Heart left ventricle (tissue), 16 donors: ENCODE measurements at regions of chr5 and their contacts with region 1.

Region 1: DNA sequence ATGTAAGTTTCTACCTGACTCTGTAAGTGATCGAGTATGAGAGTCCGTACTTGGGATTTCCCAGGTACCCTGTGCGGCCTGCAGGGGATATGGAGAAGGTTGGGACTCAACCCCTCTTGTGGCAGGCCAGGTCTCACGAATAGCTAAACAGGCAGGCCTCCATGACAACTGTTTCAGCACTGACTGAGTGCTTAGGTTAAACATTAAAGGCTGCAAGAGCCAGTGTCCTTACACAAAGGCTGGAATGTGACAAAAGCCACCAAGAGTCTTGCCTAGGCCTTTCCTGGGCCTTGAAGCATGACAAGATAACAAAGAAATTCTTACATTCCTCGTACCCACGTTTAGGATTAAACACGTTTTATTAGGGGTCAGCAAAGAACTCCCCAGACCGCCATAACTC is 58.6 kb downstream of the THBS4 start:
- DNase-seq: no peak
- ATAC-seq: no peak
- H3K4me3 ChIP-seq: no peak overlapping the region
- H3K27ac ChIP-seq: peak overlapping the region in 2 of 12 donors; percentile 35 to 47
- H3K4me1 ChIP-seq: peaks cover 0 to 11% (median 3%) of the 10 kb centered on the region in 12 donors
- H3K27me3 ChIP-seq: no peaks in the 10 kb centered on the region
- CTCF ChIP-seq: no peak
- POLR2A ChIP-seq: no peak

Region 2: GRCh38 chr5:80255732-80256479 is 162.1 kb after region 1 on chr5 and contains the start of gene SERINC5:
- intact Hi-C with region 1: loop called in 2 of 10 experiments (anchors 5 kb)
- DNase-seq: peak; percentile 91 to 95 (median 92)
- ATAC-seq: peak; percentile 76 to 95 (median 90)
- H3K4me3 ChIP-seq: peak within 1 kb of the TSS; percentile 58 to 92 (median 80)
- H3K27ac ChIP-seq: peak within 1 kb of the TSS; percentile 88 to 99 (median 96)
- H3K4me1 ChIP-seq: peaks cover 0 to 47% (median 28%) of the 10 kb centered on the region in 12 donors
- H3K27me3 ChIP-seq: no peaks in the 10 kb centered on the region
- CTCF ChIP-seq: peak in 1 of 12 donors; percentile 4
- POLR2A ChIP-seq: peak; percentile 63 to 95
- total RNA-seq, gene SERINC5: 10.9 to 25.9 (median 14.6) TPM

Region 3: GRCh38 chr5:80275347-80275746 is 181.6 kb after region 1 on chr5:
- intact Hi-C with region 1: loop called (anchors 1 to 10 kb)
- DNase-seq: no peak
- ATAC-seq: peak in 2 of 4 donors; percentile 61 to 62
- H3K4me3 ChIP-seq: no peak overlapping the region
- H3K27ac ChIP-seq: no peak overlapping the region
- H3K4me1 ChIP-seq: peaks cover 0 to 5% (median 0%) of the 10 kb centered on the region in 12 donors
- H3K27me3 ChIP-seq: no peaks in the 10 kb centered on the region
- CTCF ChIP-seq: peak; percentile 20 to 61 (median 48)
- POLR2A ChIP-seq: no peak

Region 4: GRCh38 chr5:80407735-80408482 is 314.1 kb after region 1 on chr5 and contains the start of gene ZFYVE16:
- intact Hi-C with region 1: loop called in 2 of 10 experiments (anchors 5 to 10 kb)
- DNase-seq: peak; percentile 98 to 99 (median 99)
- ATAC-seq: peak; percentile 96 to 98 (median 97)
- H3K4me3 ChIP-seq: peak within 1 kb of the TSS; percentile 56 to 94 (median 77)
- H3K27ac ChIP-seq: peak within 1 kb of the TSS; percentile 89 to 99 (median 96)
- H3K4me1 ChIP-seq: peaks cover 0 to 52% (median 30%) of the 10 kb centered on the region in 12 donors
- H3K27me3 ChIP-seq: no peaks in the 10 kb centered on the region
- CTCF ChIP-seq: peak in 8 of 12 donors; percentile 9 to 48 (median 28)
- POLR2A ChIP-seq: peak; percentile 44 to 92
- total RNA-seq, gene ZFYVE16: 16.1 to 53.2 (median 39.2) TPM